Naive thymus-derived CD4-positive, alpha-beta T cell (primary cell): ENCODE measurements at regions of chr4 and their contacts with region 1.

Region 1: DNA sequence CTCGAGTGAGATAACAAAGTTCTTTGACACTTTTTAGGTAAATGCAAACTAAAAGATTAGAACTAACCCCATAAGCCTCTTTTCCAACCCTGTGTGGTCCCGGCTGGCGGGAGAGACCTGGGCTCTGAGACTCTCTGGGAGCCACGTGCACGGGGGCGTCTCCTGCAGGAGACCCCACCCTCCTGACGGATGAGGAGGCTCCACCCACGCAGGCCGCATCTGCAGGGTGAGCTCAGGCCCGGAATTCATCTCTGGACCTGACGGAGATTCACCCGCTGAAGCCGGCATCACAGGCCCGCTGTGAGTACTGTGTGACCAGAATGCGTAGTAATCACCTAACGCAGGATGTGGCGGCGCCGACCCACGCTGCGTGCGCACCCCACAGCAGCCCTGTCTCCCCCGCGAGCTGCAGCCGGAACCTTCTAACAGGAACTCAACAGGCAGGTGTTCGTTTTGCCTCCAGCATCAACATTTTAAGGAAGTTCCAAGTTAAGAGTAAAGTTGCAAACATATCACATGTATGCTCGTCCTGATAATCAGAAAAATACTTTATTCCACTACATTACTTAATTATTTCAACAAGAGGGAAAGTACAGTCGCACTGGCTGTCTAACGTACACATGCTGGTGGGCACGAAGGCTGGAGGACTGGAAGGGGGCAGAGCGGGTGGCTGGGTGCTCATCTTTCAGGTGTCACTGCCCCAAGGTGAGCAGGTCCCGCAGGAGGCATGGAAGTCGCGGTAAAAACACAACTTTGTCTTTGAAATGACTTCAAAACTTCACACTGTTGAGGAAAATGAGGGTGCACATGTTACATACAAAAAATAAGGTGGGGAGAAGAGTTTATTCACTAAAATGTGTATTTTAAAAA is 44.5 kb downstream of the FGFRL1 start:
- DNase-seq: peak; percentile 65 to 93 (median 91)
- ATAC-seq: peak; percentile 96
- H3K4me3 ChIP-seq: peak overlapping the region; percentile 74
- H3K4me3 Mint-ChIP-seq: peak overlapping the region; percentile 74 to 89 (median 85)
- H3K27ac ChIP-seq: peak overlapping the region; percentile 67
- H3K27ac Mint-ChIP-seq: peak overlapping the region; percentile 87 to 98 (median 95)
- H3K4me1 ChIP-seq: peaks cover 13 to 14% of the 10 kb centered on the region in 2 donors
- H3K4me1 Mint-ChIP-seq: peaks cover 8 to 17% (median 10%) of the 10 kb centered on the region in 7 donors
- H3K27me3 ChIP-seq: no peaks in the 10 kb centered on the region
- H3K27me3 Mint-ChIP-seq: peaks cover 0 to 17% (median 0%) of the 10 kb centered on the region in 5 donors

Region 2: GRCh38 chr4:663438-664428 is 392.2 kb before region 1 on chr4:
- CTCF ChIA-PET with region 1: no interaction called
- POLR2A ChIA-PET with region 1: no interaction called
- intact Hi-C with region 1: loop called in 1 of 2 experiments (anchors 5 kb)
- DNase-seq: peak; percentile 59 to 77 (median 75)
- ATAC-seq: peak; percentile 91
- H3K4me3 ChIP-seq: peak overlapping the region; percentile 86
- H3K4me3 Mint-ChIP-seq: peak overlapping the region; percentile 72 to 95 (median 86)
- H3K27ac ChIP-seq: peak overlapping the region; percentile 90
- H3K27ac Mint-ChIP-seq: peak overlapping the region; percentile 48 to 93 (median 89)
- H3K4me1 ChIP-seq: peaks cover 4 to 5% of the 10 kb centered on the region in 2 donors
- H3K4me1 Mint-ChIP-seq: peaks cover 3 to 33% (median 13%) of the 10 kb centered on the region in 7 donors
- H3K27me3 ChIP-seq: no peaks in the 10 kb centered on the region
- H3K27me3 Mint-ChIP-seq: no peaks in the 10 kb centered on the region

Region 3: DNA sequence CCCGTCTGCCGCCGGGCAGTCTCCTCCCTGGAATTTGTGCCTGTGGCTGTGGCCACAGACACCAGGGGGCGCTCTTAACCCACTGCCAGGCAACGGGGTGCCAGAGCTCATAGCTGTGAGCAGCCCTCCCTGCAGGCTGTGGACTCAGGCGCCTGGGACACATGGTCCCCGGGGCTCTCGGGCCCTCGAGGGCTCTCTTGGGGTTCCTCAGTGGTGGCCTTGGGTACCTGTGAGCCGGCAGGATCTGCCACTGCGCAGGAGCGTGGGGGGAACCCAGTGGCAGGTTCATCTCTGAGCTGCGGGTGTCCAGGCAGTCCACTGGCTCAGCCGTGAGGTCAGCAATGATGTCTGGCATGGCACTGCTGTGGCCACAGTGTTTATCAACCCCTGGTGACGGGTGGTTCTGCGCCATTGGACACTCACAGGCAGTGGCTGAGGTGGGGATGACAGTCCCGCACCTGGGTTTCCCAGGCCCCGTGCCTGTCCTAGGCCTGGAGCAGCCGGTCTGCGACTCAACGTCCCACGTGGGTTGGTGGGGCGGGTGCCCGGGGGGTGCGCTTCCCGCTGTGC is 313.1 kb before region 1 on chr4:
- CTCF ChIA-PET with region 1: no interaction called
- POLR2A ChIA-PET with region 1: no interaction called
- intact Hi-C with region 1: loop called in 1 of 2 experiments (anchors 5 kb)
- DNase-seq: peak; percentile 47 to 80 (median 69)
- ATAC-seq: peak; percentile 93
- H3K4me3 ChIP-seq: no peak overlapping the region
- H3K4me3 Mint-ChIP-seq: no peak overlapping the region
- H3K27ac ChIP-seq: no peak overlapping the region
- H3K27ac Mint-ChIP-seq: peak overlapping the region in 1 of 9 donors; percentile 41
- H3K4me1 ChIP-seq: no peaks in the 10 kb centered on the region
- H3K4me1 Mint-ChIP-seq: peaks cover 0 to 6% (median 2%) of the 10 kb centered on the region in 7 donors
- H3K27me3 ChIP-seq: no peaks in the 10 kb centered on the region
- H3K27me3 Mint-ChIP-seq: no peaks in the 10 kb centered on the region

Region 4: DNA sequence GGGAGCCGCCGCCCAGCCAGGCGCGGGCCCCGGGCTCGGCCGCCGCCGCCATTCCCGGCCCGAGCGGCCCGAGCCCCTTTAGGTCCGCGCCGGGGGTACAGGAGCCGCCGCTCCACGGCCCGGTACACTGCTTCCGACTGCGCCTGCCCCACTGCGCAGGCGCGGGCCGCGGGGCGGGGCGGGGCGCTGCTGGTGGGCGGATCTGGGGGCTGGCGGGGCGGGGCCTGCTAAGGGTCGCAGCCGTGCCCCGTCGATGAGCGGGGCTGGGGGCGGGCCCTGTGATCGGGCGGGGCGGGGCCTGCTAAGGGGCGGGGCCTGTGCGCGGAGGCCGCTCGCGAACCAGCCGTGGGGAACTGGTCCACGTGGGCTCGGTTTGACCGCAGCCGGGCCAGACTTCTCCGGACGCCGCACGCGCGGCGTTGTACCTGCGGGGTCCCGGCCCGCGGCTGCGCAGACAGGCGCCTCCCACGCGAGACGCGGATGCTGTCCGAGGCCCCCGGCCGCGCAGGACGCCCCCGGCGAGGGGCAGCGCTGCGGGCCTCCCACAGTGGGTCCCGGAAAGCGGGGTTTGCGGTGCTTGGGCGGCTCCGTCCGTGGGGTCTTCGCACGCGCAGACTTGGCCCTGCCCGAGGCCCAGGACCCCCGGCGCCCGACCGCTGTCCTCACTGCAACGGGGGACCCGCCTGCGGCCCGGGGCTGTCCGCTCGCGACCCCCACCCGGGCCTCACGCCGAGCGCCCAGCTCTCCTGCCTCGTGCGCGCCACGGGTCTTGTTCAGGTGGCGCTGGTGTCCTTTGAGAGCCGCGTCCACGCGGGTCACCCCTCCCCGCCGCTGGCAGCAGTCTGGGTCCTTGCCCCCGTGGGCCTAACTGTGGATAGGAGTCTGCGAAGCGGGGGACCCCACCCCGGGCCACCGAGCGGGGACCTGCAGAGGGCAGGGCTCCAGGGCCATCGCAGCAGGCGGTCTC is 82.2 kb before region 1 on chr4 and contains the start of gene DGKQ:
- CTCF ChIA-PET with region 1: no interaction called
- POLR2A ChIA-PET with region 1: no interaction called
- intact Hi-C with region 1: loop called in 1 of 2 experiments (anchors 5 kb)
- DNase-seq: peak; percentile 68 to 93 (median 83)
- ATAC-seq: peak; percentile 96
- H3K4me3 ChIP-seq: peak within 1 kb of the TSS; percentile 56
- H3K4me3 Mint-ChIP-seq: peak within 1 kb of the TSS; percentile 19 to 75 (median 56)
- H3K27ac ChIP-seq: peak within 1 kb of the TSS; percentile 72
- H3K27ac Mint-ChIP-seq: no peak within 1 kb of the TSS
- H3K4me1 ChIP-seq: peaks cover 13 to 26% of the 10 kb centered on the region in 2 donors
- H3K4me1 Mint-ChIP-seq: peaks cover 0 to 17% (median 10%) of the 10 kb centered on the region in 7 donors
- H3K27me3 ChIP-seq: no peaks in the 10 kb centered on the region
- H3K27me3 Mint-ChIP-seq: no peaks in the 10 kb centered on the region
- total RNA-seq, gene DGKQ: 14.9 to 28.0 (median 22.7) TPM

Region 5: DNA sequence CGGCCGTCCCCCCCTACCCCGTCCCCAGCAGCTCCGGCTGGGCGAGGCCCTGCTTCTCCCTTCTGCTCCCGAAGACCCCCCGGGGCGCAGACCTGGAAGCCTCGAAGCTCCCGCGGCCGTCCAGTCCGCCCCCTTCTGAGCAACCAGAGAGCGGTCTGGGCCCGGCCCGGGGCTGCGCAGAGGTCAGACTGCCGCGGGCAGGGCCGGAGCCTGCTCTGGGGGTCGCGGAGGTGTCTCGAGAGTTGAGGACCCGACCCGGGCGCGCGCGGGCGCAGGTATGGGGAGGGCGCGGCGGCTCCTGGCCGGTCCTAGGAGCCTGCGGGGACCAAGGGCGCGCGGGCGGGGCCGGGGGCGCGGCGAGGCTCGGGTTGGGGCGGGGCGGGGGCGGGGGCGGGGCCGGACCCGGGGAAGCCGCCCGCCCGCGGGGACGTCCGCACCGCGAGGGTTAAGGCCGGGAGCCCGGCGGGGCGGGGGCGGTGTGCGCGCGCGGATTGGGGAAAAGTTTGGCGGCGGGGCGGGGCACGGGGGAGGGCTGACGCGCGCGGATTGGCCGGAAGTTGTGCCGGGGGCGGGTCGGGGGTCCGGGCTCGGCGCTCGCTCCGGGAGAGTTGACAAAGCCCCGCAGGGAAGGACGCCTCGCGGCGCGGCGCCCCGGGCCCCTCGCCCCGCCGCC is 44.8 kb before region 1 on chr4 and contains the start of gene FGFRL1:
- CTCF ChIA-PET with region 1: no interaction called
- POLR2A ChIA-PET with region 1: interaction called, 11 read pairs
- intact Hi-C with region 1: loop called (anchors 1 to 5 kb)
- DNase-seq: peak; percentile 78 to 95 (median 87)
- ATAC-seq: peak; percentile 78
- H3K4me3 ChIP-seq: peak within 1 kb of the TSS; percentile 77
- H3K4me3 Mint-ChIP-seq: peak within 1 kb of the TSS; percentile 86 to 97 (median 89)
- H3K27ac ChIP-seq: peak within 1 kb of the TSS; percentile 83
- H3K27ac Mint-ChIP-seq: peak within 1 kb of the TSS; percentile 76 to 96 (median 92)
- H3K4me1 ChIP-seq: peaks cover 0 to 10% of the 10 kb centered on the region in 2 donors
- H3K4me1 Mint-ChIP-seq: peaks cover 15 to 21% (median 18%) of the 10 kb centered on the region in 7 donors
- H3K27me3 ChIP-seq: no peaks in the 10 kb centered on the region
- H3K27me3 Mint-ChIP-seq: peaks cover 24 to 31% (median 27%) of the 10 kb centered on the region in 5 donors
- total RNA-seq, gene FGFRL1: 10.6 to 28.1 (median 22.0) TPM

Region 6: DNA sequence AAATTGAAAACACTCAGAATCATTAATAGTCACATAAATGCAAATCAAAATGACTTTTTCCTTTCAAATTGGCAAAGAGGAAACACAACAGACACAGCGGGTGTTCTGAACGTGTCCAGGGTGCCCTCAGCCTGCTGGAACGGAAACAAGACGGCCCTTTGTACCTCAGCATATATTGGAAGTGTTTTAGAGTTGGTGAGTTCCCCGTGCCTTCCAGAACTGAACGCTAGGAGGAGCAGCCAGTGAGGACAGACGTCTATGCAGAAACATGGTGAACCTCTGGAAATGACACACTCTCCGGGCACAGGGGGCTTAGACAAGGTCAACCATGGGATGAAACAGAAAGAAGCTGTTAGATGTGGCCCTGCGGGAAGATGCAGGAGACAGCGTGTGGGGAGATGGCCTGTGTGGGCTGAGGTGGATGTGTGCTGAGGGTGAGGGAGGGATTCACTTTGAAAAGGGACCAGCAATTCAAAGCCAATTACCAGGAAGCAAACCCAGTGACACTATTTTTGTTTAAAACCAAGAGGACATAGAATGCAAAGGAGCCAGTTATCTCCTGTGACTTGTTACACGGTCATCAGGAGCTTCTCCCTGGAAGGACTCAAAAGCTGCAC is 17.0 kb after region 1 on chr4:
- CTCF ChIA-PET with region 1: interaction called, 4 read pairs
- POLR2A ChIA-PET with region 1: interaction called, 4 read pairs
- intact Hi-C with region 1: loop called in 1 of 2 experiments (anchors 1 kb)
- DNase-seq: peak in 8 of 9 donors; percentile 38 to 66 (median 54)
- ATAC-seq: peak; percentile 90
- H3K4me3 ChIP-seq: no peak overlapping the region
- H3K4me3 Mint-ChIP-seq: peak overlapping the region in 2 of 10 donors; percentile 0 to 9
- H3K27ac ChIP-seq: no peak overlapping the region
- H3K27ac Mint-ChIP-seq: peak overlapping the region in 6 of 9 donors; percentile 1 to 38 (median 18)
- H3K4me1 ChIP-seq: peaks cover 0 to 7% of the 10 kb centered on the region in 2 donors
- H3K4me1 Mint-ChIP-seq: peaks cover 7 to 15% (median 14%) of the 10 kb centered on the region in 7 donors
- H3K27me3 ChIP-seq: no peaks in the 10 kb centered on the region
- H3K27me3 Mint-ChIP-seq: peaks cover 8 to 29% (median 13%) of the 10 kb centered on the region in 5 donors